Activated naive CD4-positive, alpha-beta T cell treated with anti-CD3 and anti-CD28 coated beads, Interleukin-2, amount 10 ng/mL, durations not matched to agents 7 days and 5 days (primary cell): ENCODE measurements at regions of chr3 and their contacts with region 1.

Region 1: DNA sequence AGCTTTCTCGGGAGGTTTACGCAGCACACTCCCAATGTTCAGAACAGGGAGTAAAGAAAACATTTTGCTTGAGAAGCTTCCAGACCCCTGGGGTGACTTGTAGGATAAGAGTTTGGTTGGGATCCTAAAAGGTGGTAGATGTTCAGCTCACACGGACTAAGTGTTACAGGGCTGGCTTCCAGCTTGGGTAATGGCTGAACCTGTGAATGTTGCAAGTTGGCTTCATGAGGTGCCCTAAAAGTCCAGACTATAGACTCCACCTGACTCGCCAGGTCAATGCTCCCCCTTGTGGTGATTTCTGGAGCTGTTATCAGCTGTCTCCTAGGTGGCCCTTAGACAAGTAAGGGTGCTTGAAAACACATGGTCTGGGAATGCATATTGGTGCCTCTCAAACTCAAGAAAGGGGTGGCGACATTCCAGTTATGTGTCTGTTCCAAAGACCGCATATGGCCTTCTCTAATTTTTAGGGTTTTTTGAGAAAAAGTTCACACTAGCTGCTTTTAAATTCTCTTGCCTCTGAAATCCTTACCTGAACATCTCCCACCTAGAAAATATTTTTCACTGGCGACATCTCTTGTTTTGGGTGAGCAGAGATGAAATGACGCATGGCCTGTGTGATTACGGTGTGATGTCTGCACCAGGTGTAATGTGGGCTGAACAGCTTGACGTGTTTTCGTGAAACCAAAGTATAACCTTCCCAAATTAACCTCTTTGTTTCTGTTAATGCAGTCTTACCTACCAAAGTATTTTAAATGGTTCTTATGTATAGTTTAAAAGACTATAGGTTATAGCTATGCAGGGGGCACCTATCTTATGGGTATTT is 175.7 kb upstream of the KBTBD8 start:
- DNase-seq: peak; percentile 81
- H3K4me3 Mint-ChIP-seq: no peak overlapping the region
- H3K27ac Mint-ChIP-seq: no peak overlapping the region
- H3K4me1 Mint-ChIP-seq: no peaks in the 10 kb centered on the region
- H3K27me3 Mint-ChIP-seq: peaks cover 16% of the 10 kb centered on the region

Region 2: GRCh38 chr3:66253790-66254620 is 568.4 kb before region 1 on chr3:
- CTCF ChIA-PET with region 1: interaction called, 63 read pairs
- DNase-seq: no peak
- H3K4me3 Mint-ChIP-seq: no peak overlapping the region
- H3K27ac Mint-ChIP-seq: no peak overlapping the region
- H3K4me1 Mint-ChIP-seq: no peaks in the 10 kb centered on the region
- H3K27me3 Mint-ChIP-seq: no peaks in the 10 kb centered on the region

Region 3: GRCh38 chr3:66276705-66277274 is 545.6 kb before region 1 on chr3:
- CTCF ChIA-PET with region 1: interaction called, 50 read pairs
- DNase-seq: peak; percentile 75
- H3K4me3 Mint-ChIP-seq: no peak overlapping the region
- H3K27ac Mint-ChIP-seq: no peak overlapping the region
- H3K4me1 Mint-ChIP-seq: peaks cover 25% of the 10 kb centered on the region
- H3K27me3 Mint-ChIP-seq: no peaks in the 10 kb centered on the region

Region 4: GRCh38 chr3:66407611-66408218 is 414.7 kb before region 1 on chr3:
- CTCF ChIA-PET with region 1: interaction called, 46 read pairs
- DNase-seq: peak; percentile 83
- H3K4me3 Mint-ChIP-seq: no peak overlapping the region
- H3K27ac Mint-ChIP-seq: no peak overlapping the region
- H3K4me1 Mint-ChIP-seq: no peaks in the 10 kb centered on the region
- H3K27me3 Mint-ChIP-seq: no peaks in the 10 kb centered on the region

Region 5: DNA sequence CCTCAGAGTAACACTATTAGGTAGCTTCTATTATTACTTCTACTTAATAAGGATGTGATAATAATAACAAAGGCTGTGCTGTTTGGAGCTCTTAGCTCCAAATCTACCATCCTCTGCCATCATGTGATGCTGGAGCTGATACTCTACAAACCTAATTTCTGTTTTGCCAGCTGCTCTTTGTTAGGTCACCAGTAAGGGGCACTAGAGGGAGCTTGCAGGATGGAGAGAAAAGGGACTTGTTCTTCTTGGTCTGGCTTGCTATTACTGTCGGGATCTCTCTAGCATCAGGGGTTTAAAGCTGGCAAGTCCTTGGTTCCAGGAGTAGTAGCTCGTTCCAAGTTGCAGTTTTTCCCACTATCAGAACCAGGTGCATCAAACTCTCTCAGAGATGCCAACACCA is 19.2 kb before region 1 on chr3:
- CTCF ChIA-PET with region 1: interaction called, 17 read pairs
- DNase-seq: no peak
- H3K4me3 Mint-ChIP-seq: no peak overlapping the region
- H3K27ac Mint-ChIP-seq: no peak overlapping the region
- H3K4me1 Mint-ChIP-seq: peaks cover 4% of the 10 kb centered on the region
- H3K27me3 Mint-ChIP-seq: peaks cover 12% of the 10 kb centered on the region